RWPE1 (cell line): ENCODE measurements at regions of chr1 and their contacts with region 1.

Region 1: DNA sequence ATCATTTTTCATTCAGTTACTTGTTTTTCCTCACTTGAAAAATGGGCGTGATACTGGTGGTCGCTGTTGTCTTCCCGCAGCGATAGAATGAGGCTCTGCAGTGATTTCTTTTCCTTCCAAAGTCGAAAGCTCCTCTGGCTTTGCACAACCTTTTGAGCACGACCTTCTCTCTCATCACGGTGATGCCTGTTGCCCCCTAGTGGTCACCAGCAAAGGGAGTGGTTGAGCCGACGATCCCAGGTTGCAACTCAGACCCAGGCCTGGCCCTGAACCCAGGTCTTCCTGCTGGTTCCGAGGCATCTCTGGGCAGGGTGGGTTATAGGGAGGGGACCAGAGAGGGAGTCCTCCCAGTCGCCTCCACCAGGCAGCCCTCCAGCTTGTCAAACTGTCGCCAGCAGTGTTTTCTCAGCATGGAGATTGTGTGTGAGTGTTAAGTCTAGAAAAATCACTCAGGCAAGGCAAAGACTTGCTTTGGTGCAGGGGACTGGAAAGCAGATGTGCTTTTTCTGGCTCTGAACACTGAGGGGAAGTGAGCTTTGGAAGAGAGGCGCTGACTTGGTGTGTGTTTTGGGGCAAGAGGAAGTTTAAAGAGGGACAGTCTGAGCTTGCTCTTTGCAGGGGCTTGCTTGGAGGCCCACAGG is 285.3 kb downstream of the CAMTA1 start:
- DNase-seq: peak; percentile 66
- H3K27ac ChIP-seq: no peak overlapping the region
- CTCF ChIP-seq: peak; percentile 78

Region 2: GRCh38 chr1:7014640-7014930 is 55.9 kb before region 1 on chr1:
- CTCF ChIA-PET with region 1: no interaction called
- POLR2A ChIA-PET with region 1: no interaction called
- DNase-seq: no peak
- H3K27ac ChIP-seq: no peak overlapping the region
- CTCF ChIP-seq: no peak

Region 3: DNA sequence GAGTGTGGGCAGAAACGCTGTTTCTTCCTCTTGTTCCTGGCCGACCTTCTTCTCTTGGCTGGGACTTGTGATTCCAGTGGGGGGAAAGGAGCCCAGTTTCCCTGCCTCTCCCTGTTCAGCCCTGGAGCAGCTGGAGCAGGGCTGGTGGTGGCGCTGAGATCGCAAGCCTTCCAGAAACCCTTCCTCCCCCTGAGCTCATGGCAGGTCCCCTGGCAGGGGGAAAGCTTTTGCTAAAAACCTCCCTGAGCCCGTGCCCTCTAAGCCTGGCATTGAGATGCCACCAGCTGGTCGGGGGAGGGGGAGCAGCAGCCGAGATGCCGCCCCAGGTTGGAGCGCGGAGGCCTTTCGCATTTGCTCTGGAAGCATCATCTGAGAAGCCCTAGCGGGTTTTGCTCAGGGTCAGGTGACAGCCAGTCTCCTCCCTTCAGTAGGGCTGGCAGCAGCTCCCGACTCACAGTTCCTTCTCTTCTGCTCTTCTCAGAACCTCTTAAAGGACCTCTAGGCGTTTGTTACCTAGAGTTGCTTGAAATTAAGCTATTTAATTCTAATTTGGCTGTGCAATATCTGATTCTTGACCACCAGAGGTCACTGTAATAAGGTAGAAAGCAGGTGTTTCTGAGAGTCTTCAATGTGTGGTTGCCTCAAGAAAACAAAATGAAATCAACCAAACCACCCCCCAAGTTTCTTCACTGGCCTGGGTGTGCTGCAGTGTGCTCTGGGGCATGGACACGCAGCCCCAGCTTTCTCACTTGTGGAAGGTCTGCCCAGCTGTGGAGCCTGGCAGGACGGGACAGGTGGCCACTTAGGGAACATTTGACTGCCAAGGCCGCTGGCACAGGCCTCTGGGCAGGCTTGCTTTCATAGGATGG is 28.0 kb before region 1 on chr1:
- CTCF ChIA-PET with region 1: interaction called, 15 read pairs
- POLR2A ChIA-PET with region 1: no interaction called
- DNase-seq: peak; percentile 67
- H3K27ac ChIP-seq: no peak overlapping the region
- CTCF ChIP-seq: peak; percentile 57

Region 4: DNA sequence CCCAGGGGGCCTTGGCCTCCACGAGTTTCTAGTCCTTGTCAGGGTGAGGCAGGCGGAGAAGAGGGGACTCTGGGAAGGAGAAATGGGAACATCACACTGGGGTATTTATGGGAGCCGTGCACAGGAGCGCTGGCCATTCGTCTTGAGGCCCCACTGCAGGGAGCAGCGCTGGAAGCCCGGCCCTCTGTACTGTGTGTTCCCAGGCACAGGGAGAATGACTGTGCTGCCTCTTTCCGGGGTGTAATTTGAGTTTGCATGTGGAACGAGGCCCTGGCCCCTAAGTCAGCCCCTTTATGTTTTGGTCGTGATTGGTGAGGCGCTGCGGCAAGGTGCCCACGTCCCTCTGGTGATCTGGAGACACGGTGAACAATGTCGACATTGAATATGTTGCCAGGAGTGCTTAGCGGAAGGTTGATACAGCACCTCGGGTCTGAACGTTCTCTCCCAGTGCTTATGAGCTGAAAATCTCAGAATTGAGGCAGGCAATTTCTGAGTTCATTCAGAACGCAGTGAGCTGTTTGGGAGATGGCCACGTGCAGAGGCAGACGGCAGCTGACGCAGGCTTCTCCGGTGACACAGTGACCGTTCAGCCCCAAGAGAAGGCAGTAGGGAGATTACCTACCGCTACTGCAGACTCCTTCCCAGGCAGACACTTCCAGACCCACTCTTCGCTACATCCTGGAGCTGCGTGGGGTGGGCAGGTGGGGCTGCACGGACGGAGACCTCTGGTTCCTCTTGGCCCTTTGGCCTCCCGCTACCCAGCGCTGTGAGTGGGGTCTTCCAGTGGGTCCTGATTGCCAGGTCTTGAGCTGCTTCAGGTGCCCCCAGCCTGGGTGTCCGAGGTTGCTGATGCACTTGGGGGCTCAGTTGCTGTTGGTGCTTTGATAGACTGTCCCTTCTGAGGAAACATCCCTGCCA is 19.5 kb before region 1 on chr1:
- CTCF ChIA-PET with region 1: interaction called, 10 read pairs
- POLR2A ChIA-PET with region 1: no interaction called
- DNase-seq: no peak
- H3K27ac ChIP-seq: no peak overlapping the region
- CTCF ChIP-seq: no peak

Region 5: GRCh38 chr1:7084232-7084894 is 13.9 kb after region 1 on chr1:
- CTCF ChIA-PET with region 1: interaction called, 12 read pairs
- POLR2A ChIA-PET with region 1: no interaction called
- DNase-seq: no peak
- H3K27ac ChIP-seq: no peak overlapping the region
- CTCF ChIP-seq: no peak

Region 6: DNA sequence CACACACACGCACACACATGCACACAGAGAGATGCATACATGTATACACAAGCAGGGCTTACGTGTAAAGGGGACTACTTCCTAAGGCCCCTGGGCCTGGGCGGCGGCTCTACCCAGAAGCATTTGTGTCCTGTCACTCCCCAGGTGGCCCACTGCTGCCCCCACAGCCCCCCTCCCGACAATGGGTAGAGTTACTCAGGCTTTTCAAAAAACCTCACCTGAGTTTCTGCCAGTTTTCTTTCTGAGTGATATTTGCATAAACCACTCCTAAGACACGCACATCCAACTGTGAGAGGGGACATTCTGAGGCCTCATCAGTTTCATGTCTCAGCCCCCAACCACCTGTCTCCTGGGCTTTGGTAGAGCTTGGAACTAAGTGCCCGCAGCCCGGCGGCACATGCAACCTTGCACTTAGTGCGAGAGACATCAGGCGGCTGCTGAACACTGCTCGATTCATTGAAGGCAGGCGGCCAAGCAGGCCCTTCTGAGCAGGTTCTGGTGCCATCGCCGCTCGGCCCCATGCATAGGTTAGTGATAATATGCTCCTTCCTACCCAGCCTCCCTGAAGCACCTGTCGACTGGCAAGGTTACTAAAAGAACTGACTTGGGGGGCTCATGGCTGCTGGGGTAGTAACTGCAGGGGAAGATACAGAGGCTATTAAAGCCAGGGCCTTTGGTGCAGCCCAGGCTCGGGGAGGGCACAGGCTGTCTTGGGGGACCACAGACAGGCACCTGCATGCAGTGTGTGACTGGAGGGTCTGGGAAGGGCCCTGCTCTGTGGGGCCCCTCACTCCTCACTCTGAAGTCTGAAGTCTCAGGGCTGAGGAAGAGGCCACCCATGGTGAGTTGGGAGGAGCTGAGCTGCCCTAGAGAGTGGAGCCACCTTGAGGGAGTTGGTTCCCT is 336.4 kb after region 1 on chr1:
- CTCF ChIA-PET with region 1: no interaction called
- POLR2A ChIA-PET with region 1: no interaction called
- DNase-seq: no peak
- H3K27ac ChIP-seq: no peak overlapping the region
- CTCF ChIP-seq: no peak